Naive thymus-derived CD8-positive, alpha-beta T cell (primary cell): ENCODE measurements at regions of chr4 and their contacts with region 1.

Region 1: DNA sequence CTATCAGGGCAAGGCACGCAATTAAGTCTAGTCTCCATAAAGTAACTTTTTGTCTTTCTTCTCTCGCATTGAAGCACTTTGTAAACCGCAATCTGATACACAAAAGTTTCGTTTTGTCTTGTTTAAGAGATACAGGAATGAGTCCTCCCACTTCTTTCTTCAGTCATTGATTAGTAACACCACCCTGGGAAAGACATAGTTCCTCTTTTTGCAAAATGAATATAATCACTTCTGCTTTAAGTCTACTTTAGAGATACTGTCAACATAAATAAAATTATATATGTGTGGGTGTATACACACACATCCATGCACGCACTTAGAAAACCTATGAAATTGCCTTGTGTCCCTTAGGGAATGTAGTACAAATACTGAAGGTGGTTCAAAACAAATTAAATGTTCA is 11.7 kb downstream of the COQ2 start:
- DNase-seq: no peak
- ATAC-seq: no peak
- H3K4me3 Mint-ChIP-seq: no peak overlapping the region
- H3K27ac Mint-ChIP-seq: peak overlapping the region in 2 of 10 donors; percentile 3 to 45
- H3K4me1 Mint-ChIP-seq: peaks cover 0 to 24% (median 9%) of the 10 kb centered on the region in 4 donors
- H3K27me3 Mint-ChIP-seq: no peaks in the 10 kb centered on the region

Region 2: GRCh38 chr4:83284193-83285054 is 11.5 kb after region 1 on chr4 and contains the start of gene COQ2:
- POLR2A ChIA-PET with region 1: interaction called, 10 read pairs
- DNase-seq: peak; percentile 87 to 96 (median 93)
- ATAC-seq: peak; percentile 90
- H3K4me3 Mint-ChIP-seq: peak within 1 kb of the TSS; percentile 87 to 99 (median 98)
- H3K27ac Mint-ChIP-seq: peak within 1 kb of the TSS; percentile 96 to 99 (median 98)
- H3K4me1 Mint-ChIP-seq: peaks cover 18 to 54% (median 33%) of the 10 kb centered on the region in 4 donors
- H3K27me3 Mint-ChIP-seq: no peaks in the 10 kb centered on the region
- polyA plus RNA-seq, gene COQ2: 5.0 to 8.1 (median 5.2) TPM